GM10248 (cell line): ENCODE measurements at regions of chr4 and their contacts with region 1.

Region 1: DNA sequence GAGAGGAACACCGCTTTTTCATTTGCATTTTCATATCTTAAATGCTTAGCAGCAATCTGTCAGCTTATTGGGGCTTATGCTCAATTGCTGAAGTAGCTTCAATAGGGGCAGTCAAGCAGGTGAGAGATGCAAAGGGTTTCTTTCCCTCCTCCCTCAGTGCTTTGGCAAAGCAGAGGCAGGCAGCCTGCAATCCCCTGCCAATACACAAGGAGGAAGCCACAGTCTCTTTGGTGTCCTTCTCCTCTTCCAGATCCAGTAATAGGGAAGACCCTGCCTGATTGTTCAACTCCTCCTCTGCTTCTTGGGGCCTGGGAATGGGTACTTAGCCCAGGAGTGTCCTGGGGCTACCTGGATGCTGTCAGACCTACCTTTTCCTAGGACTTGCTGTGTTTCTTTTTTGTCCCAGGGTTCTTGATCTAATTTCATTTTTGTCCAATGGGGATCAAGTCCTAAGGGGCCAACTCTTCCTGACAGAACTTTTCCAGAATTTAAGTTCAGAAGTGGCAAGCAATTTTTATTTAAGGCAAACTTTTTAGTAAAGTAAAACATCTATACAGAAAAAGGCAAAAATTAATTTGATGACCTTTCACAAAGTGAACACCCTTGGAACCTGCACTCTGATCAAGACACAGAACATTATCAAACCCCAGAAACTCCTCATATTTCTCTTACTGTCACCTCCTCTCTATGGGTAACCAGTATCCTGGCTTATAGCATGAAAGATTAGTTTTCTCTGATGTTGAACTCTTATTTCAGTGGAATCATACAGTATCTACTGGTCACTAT is 260.3 kb downstream of the PPP3CA start:
- DNase-seq: no peak
- CTCF ChIP-seq: no peak

Region 2: GRCh38 chr4:101025755-101026154 is 61.2 kb before region 1 on chr4:
- CTCF ChIA-PET with region 1: no interaction called
- POLR2A ChIA-PET with region 1: interaction called, 10 read pairs
- DNase-seq: no peak
- CTCF ChIP-seq: no peak